ENCODE measurements at regions of chr17 and their contacts with region 1.

Region 1: GRCh38 chr17:32915245-32915644 is 12.7 kb upstream of the TMEM98 start:
- DNase-seq: peak in 2 of 4 experiments; percentile 47 to 74
- ATAC-seq: peak; percentile 34; the same call in 1 of the 3 replicates
- H3K4me3 ChIP-seq: no peak overlapping the region
- H3K27ac ChIP-seq: peak overlapping the region; percentile 47; the same call in 2 of the 3 replicates
- H3K4me1 ChIP-seq: peaks cover 21 to 55% of the 10 kb centered on the region in 2 experiments
- H3K27me3 ChIP-seq: no peaks in the 10 kb centered on the region
- CTCF ChIP-seq: no peak
- EP300 ChIP-seq: no peak; the same call in 1 of the 2 replicates
- POLR2A ChIP-seq: no peak
- RAD21 ChIP-seq: no peak

Region 2: GRCh38 chr17:32927724-32928585 is 12.7 kb after region 1 on chr17 and contains the start of gene TMEM98:
- CTCF ChIA-PET with region 1: no interaction called
- POLR2A ChIA-PET with region 1: interaction called, 26 read pairs
- in situ Hi-C with region 1: no loop called
- intact Hi-C with region 1: no loop called
- DNase-seq: peak; percentile 45 to 84 (median 67)
- ATAC-seq: peak; percentile 73
- H3K4me3 ChIP-seq: peak within 1 kb of the TSS; percentile 69
- H3K27ac ChIP-seq: peak within 1 kb of the TSS; percentile 69
- H3K4me1 ChIP-seq: peaks cover 22 to 23% of the 10 kb centered on the region in 2 experiments; a peak in 4 of 5 replicates
- H3K27me3 ChIP-seq: no peaks in the 10 kb centered on the region
- CTCF ChIP-seq: no peak
- EP300 ChIP-seq: no peak
- POLR2A ChIP-seq: 0 out of 2 replicates have a peak, but pooled peaks have one; percentile 14
- RAD21 ChIP-seq: no peak
- polyA plus RNA-seq, gene TMEM98: 112 to 115 TPM

Region 3: GRCh38 chr17:34091975-34092374 is 1176.7 kb after region 1 on chr17:
- CTCF ChIA-PET with region 1: no interaction called
- POLR2A ChIA-PET with region 1: no interaction called
- in situ Hi-C with region 1: no loop called
- intact Hi-C with region 1: no loop called
- DNase-seq: no peak
- ATAC-seq: no peak
- H3K4me3 ChIP-seq: no peak overlapping the region
- H3K27ac ChIP-seq: no peak overlapping the region
- H3K4me1 ChIP-seq: no peaks in the 10 kb centered on the region
- H3K27me3 ChIP-seq: no peaks in the 10 kb centered on the region
- CTCF ChIP-seq: no peak
- EP300 ChIP-seq: no peak
- POLR2A ChIP-seq: no peak
- RAD21 ChIP-seq: no peak

Measured in K562 (cell line).